ENCODE measurements at regions of chr17 and their contacts with region 1.

Region 1: DNA sequence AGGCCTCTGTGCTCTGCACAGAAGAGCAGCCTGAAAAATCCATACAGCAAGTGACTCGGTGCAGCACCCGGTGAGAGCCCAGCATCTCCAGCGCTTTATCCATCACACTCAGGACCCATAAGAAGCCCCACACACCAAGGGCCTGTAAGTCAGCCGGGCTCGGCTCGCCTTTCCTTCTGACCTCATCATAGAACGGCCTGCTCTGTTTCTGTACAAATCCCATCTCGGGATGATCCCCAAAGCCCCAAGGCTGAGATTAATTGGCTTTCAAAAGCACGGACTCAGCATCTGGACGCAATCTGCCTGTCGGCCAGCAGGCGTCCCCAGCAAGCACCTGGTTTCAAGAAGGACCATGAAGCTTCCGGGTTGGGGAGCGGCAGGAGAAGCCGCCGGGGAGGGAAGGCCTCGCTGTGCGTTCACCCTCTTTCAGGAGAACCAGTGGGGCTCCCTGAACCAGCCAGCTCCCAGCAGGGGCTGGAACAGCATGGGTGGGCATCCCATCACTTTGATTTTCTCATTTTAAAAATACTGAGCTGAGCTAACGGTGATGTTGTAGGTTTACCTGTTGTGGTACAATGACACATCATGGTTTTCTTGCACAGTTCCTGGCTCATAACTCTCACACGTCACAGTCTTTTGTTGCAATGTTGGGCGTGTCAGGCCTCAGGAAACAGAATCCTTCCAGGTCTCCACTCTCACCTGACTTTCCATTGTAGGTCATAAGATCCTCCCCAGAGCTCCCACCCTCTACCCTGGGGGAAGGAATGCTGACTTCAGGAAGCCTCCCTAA is 6.7 kb downstream of the CCDC57 start:
- DNase-seq: peak; percentile 98
- H3K4me3 ChIP-seq: peak overlapping the region; percentile 1 to 26 (median 18)
- H3K27ac ChIP-seq: peak overlapping the region; percentile 92
- H3K4me1 ChIP-seq: peaks cover 26% of the 10 kb centered on the region
- H3K27me3 ChIP-seq: no peaks in the 10 kb centered on the region
- CTCF ChIP-seq: peak; percentile 82 to 94

Region 2: GRCh38 chr17:81911277-81911961 is 294.5 kb before region 1 on chr17 and contains the start of gene PCYT2:
- CTCF ChIA-PET with region 1: no interaction called
- dilution Hi-C with region 1: loop called (anchors 5 kb)
- in situ Hi-C with region 1: no loop called
- intact Hi-C with region 1: no loop called
- DNase-seq: peak; percentile 85
- H3K4me3 ChIP-seq: peak within 1 kb of the TSS; percentile 81 to 92 (median 83)
- H3K27ac ChIP-seq: peak within 1 kb of the TSS; percentile 19
- H3K4me1 ChIP-seq: peaks cover 12% of the 10 kb centered on the region
- H3K27me3 ChIP-seq: no peaks in the 10 kb centered on the region
- CTCF ChIP-seq: peak in 1 of 2 donors; percentile 2
- total RNA-seq, gene PCYT2: 23.5 to 48.7 TPM

Region 3: DNA sequence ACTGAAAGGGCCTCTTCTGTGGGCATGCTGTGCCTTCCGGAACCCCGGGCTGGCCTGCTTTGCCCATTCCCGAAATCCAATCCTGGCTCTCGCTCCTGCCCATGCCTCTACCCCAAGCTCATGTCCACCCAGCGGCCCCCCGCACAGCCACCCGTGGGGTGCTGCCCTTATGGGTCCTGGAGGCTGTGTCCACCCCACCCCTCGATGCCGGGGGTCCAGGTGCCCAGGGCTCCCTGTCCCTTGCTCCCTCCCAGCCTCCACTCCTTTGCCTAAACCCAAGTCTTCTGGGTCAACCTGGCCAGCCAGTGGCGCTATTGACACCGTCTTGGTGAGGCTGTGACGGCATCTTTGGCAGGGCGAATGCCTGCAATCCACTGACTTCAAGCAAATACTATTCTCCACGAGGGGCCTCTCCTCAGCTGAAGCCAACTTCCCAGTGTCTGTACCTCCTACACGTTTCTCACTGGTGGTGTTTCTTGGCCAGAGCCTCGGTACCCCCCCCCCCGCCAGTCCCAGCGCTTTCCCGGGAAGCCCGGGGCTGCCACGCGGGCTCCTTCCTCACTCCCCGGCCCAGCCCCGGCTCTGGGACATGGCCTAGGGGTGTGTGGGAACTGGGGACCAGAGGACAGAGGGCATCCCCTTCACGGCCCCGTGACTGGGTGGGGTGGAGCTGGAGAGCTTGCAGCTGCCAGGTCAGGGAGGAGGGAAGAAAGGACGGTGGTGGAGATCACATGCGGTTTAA is 128.1 kb before region 1 on chr17:
- CTCF ChIA-PET with region 1: no interaction called
- dilution Hi-C with region 1: loop called (anchors 10 kb)
- in situ Hi-C with region 1: no loop called
- intact Hi-C with region 1: no loop called
- DNase-seq: no peak
- H3K4me3 ChIP-seq: no peak overlapping the region
- H3K27ac ChIP-seq: no peak overlapping the region
- H3K4me1 ChIP-seq: no peaks in the 10 kb centered on the region
- H3K27me3 ChIP-seq: no peaks in the 10 kb centered on the region
- CTCF ChIP-seq: no peak

Region 4: GRCh38 chr17:82160075-82160474 is 45.8 kb before region 1 on chr17:
- CTCF ChIA-PET with region 1: no interaction called
- dilution Hi-C with region 1: no loop called
- in situ Hi-C with region 1: no loop called
- intact Hi-C with region 1: no loop called
- DNase-seq: peak; percentile 85
- H3K4me3 ChIP-seq: no peak overlapping the region
- H3K27ac ChIP-seq: no peak overlapping the region
- H3K4me1 ChIP-seq: no peaks in the 10 kb centered on the region
- H3K27me3 ChIP-seq: no peaks in the 10 kb centered on the region
- CTCF ChIP-seq: no peak

Region 5: GRCh38 chr17:82216301-82217119 is 10.6 kb after region 1 on chr17:
- CTCF ChIA-PET with region 1: no interaction called
- dilution Hi-C with region 1: no loop called
- in situ Hi-C with region 1: no loop called
- intact Hi-C with region 1: loop called (anchors 1 kb)
- DNase-seq: peak; percentile 93
- H3K4me3 ChIP-seq: no peak overlapping the region
- H3K27ac ChIP-seq: peak overlapping the region; percentile 63
- H3K4me1 ChIP-seq: peaks cover 46% of the 10 kb centered on the region
- H3K27me3 ChIP-seq: no peaks in the 10 kb centered on the region
- CTCF ChIP-seq: peak in 1 of 2 donors; percentile 9

Region 6: GRCh38 chr17:82303944-82304808 is 98.3 kb after region 1 on chr17:
- CTCF ChIA-PET with region 1: no interaction called
- dilution Hi-C with region 1: no loop called
- in situ Hi-C with region 1: no loop called
- intact Hi-C with region 1: no loop called
- DNase-seq: no peak
- H3K4me3 ChIP-seq: no peak overlapping the region
- H3K27ac ChIP-seq: no peak overlapping the region
- H3K4me1 ChIP-seq: peaks cover 37% of the 10 kb centered on the region
- H3K27me3 ChIP-seq: no peaks in the 10 kb centered on the region
- CTCF ChIP-seq: no peak

Region 7: GRCh38 chr17:82320956-82321927 is 115.3 kb after region 1 on chr17:
- CTCF ChIA-PET with region 1: no interaction called
- dilution Hi-C with region 1: no loop called
- in situ Hi-C with region 1: no loop called
- intact Hi-C with region 1: loop called (anchors 1 kb)
- DNase-seq: no peak
- H3K4me3 ChIP-seq: peak overlapping the region in 1 of 3 experiments; percentile 21
- H3K27ac ChIP-seq: no peak overlapping the region
- H3K4me1 ChIP-seq: peaks cover 16% of the 10 kb centered on the region
- H3K27me3 ChIP-seq: no peaks in the 10 kb centered on the region
- CTCF ChIP-seq: peak; percentile 42 to 73

Region 8: DNA sequence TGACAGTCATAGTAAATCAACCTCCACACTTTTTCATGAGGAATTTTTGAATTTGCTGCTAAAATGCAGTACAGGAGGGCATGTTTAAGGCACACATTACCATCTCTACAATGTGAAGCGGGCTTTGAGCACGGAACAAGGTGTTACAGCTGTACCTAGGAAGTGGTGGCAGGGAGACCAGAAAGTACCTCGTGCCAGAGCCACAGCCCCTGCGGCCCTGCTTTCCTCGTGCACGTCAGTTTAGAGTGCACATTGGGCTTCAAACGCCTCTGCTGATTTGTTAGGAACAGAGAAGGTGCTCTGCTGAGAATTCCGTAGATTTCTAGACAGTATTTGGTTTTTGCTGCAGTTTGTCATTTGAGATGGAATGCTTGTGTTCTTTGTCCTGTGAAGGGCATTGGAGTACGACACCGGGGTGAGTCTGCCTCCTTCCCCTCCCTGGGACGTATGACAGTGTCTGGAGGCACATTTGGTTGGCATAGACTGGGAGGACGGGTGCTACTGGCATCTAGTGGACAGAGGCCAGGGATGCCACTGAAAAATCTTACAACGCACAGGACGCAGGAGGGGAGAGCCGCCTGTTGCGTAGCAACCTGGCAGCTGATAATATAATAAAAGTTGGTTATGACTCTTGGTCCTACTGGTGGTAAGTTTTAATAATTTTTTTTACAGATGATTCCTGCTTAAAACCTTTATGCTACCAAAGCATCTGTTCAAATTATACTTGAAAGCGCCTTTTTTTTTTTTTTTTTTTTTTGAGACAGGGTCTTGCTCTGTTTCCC is 322.8 kb after region 1 on chr17:
- CTCF ChIA-PET with region 1: interaction called, 53 read pairs
- dilution Hi-C with region 1: loop called (anchors 10 kb)
- in situ Hi-C with region 1: no loop called
- intact Hi-C with region 1: loop called (anchors 10 kb)
- DNase-seq: peak; percentile 87
- H3K4me3 ChIP-seq: peak overlapping the region in 1 of 3 experiments; percentile 5
- H3K27ac ChIP-seq: peak overlapping the region; percentile 89
- H3K4me1 ChIP-seq: peaks cover 50% of the 10 kb centered on the region
- H3K27me3 ChIP-seq: no peaks in the 10 kb centered on the region
- CTCF ChIP-seq: peak; percentile 90 to 93

Measured in mammary epithelial cell (primary cell).